Heart left ventricle (tissue), 16 donors: ENCODE measurements at regions of chr22 and their contacts with region 1.

Region 1: GRCh38 chr22:45994491-45995404 is 17.8 kb upstream of the WNT7B start:
- DNase-seq: peak; percentile 85 to 94 (median 87)
- ATAC-seq: peak; percentile 20 to 45 (median 43)
- H3K4me3 ChIP-seq: no peak overlapping the region
- H3K27ac ChIP-seq: peak overlapping the region in 9 of 12 donors; percentile 80 to 97 (median 92)
- H3K4me1 ChIP-seq: peaks cover 20 to 61% (median 48%) of the 10 kb centered on the region in 12 donors
- H3K27me3 ChIP-seq: no peaks in the 10 kb centered on the region
- CTCF ChIP-seq: peak; percentile 95 to 99 (median 98)
- POLR2A ChIP-seq: no peak

Region 2: DNA sequence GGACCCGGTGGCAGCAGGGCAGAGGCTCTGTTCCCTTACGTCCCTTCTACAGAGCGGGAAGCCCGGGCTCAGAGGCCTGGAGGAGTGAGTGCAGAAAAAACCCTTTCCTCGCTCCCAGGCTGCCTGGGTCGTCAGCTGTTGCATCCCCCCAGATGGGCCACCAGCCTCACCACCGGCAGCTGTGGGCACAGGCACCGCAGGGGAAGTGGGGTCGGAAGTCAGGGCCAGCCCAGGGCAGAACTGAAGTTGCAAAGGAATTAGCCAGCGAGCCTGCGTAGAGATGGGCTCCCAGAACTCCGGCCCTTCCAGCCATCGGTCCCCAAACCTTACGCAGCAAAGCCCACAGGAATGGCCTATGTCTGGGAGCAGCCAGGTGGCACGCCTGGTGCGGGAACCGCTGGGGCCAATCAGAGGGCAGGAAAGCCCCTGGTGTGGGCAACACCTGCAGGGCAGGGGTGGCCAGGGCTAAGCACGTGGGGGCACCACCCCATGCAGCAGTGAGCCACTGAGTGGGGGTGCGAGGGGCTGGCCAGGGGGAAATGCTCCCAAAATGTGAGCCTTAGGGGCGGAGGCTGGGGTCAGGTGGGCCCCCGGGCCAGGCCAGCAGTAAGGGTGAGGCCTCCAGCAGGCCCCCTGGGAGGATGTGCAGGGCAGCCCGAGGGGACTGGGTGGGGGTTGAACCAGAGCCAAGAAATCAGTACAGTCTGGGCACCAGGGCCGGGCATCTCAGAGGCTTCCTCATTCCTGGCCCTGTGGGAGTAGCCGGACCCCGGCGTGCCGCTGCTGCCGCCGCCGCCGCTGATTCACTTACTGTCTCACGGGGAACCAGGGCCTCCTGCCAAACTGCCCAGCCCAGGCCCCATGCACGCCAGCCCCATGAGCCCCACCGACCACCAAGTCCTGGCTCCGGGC is 76.0 kb before region 1 on chr22:
- intact Hi-C with region 1: no loop called
- DNase-seq: no peak
- ATAC-seq: no peak
- H3K4me3 ChIP-seq: no peak overlapping the region
- H3K27ac ChIP-seq: no peak overlapping the region
- H3K4me1 ChIP-seq: no peaks in the 10 kb centered on the region
- H3K27me3 ChIP-seq: peaks cover 0 to 4% (median 0%) of the 10 kb centered on the region in 9 donors
- CTCF ChIP-seq: no peak
- POLR2A ChIP-seq: no peak

Region 3: GRCh38 chr22:45960477-45961386 is 34.0 kb before region 1 on chr22:
- intact Hi-C with region 1: no loop called
- DNase-seq: no peak
- ATAC-seq: no peak
- H3K4me3 ChIP-seq: no peak overlapping the region
- H3K27ac ChIP-seq: no peak overlapping the region
- H3K4me1 ChIP-seq: no peaks in the 10 kb centered on the region
- H3K27me3 ChIP-seq: peaks cover 0 to 78% (median 7%) of the 10 kb centered on the region in 9 donors
- CTCF ChIP-seq: no peak
- POLR2A ChIP-seq: no peak

Region 4: GRCh38 chr22:46035742-46036557 is 41.2 kb after region 1 on chr22:
- intact Hi-C with region 1: loop called in 1 of 10 experiments (anchors 1 kb)
- DNase-seq: peak; percentile 100
- ATAC-seq: peak; percentile 94 to 97 (median 96)
- H3K4me3 ChIP-seq: peak overlapping the region; percentile 35 to 86 (median 72)
- H3K27ac ChIP-seq: peak overlapping the region; percentile 87 to 99 (median 97)
- H3K4me1 ChIP-seq: peaks cover 3 to 29% (median 15%) of the 10 kb centered on the region in 12 donors
- H3K27me3 ChIP-seq: no peaks in the 10 kb centered on the region
- CTCF ChIP-seq: no peak
- POLR2A ChIP-seq: peak; percentile 57 to 96

Region 5: GRCh38 chr22:46267431-46268279 is 272.9 kb after region 1 on chr22 and contains the start of gene TTC38:
- intact Hi-C with region 1: loop called in 1 of 10 experiments (anchors 10 kb)
- DNase-seq: peak; percentile 96 to 98 (median 96)
- ATAC-seq: peak; percentile 93 to 98 (median 98)
- H3K4me3 ChIP-seq: peak within 1 kb of the TSS; percentile 57 to 93 (median 78)
- H3K27ac ChIP-seq: peak within 1 kb of the TSS; percentile 60 to 96 (median 90)
- H3K4me1 ChIP-seq: peaks cover 0 to 38% (median 23%) of the 10 kb centered on the region in 12 donors
- H3K27me3 ChIP-seq: peaks cover 0 to 2% (median 0%) of the 10 kb centered on the region in 9 donors
- CTCF ChIP-seq: no peak
- POLR2A ChIP-seq: peak in 1 of 2 donors; percentile 72
- total RNA-seq, gene TTC38: 21.3 to 72.4 (median 25.3) TPM

Region 6: DNA sequence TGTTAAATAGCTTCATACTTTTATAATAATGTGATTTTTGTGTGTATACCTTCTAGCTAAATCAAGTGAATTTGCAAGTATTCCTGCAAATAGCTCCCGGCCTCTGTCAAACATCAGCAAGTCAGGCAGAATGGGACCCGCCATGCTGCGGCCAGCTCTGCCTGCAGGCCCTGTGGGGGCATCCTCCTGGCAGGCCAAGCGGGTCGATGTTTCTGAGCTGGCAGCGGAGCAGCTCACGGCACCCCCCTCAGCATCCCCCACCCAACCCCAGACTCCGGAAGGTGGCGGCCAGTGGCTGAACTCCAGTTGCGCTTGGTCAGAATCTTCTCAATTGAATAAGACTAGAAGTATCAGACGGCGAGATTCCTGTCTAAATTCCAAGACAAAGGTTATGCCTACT is 321.2 kb after region 1 on chr22:
- intact Hi-C with region 1: loop called in 9 of 10 experiments (anchors 1 to 10 kb)
- DNase-seq: no peak
- ATAC-seq: no peak
- H3K4me3 ChIP-seq: no peak overlapping the region
- H3K27ac ChIP-seq: no peak overlapping the region
- H3K4me1 ChIP-seq: peaks cover 0 to 5% (median 0%) of the 10 kb centered on the region in 12 donors
- H3K27me3 ChIP-seq: no peaks in the 10 kb centered on the region
- CTCF ChIP-seq: no peak
- POLR2A ChIP-seq: no peak